ENCODE measurements at regions of chr1 and their contacts with region 1.

Region 1: GRCh38 chr1:153717330-153717729 is 10.5 kb upstream of the INTS3 start:
- DNase-seq: no peak
- H3K4me3 Mint-ChIP-seq: no peak overlapping the region
- H3K27ac Mint-ChIP-seq: no peak overlapping the region
- H3K4me1 Mint-ChIP-seq: peaks cover 2% of the 10 kb centered on the region
- H3K27me3 Mint-ChIP-seq: peaks cover 11% of the 10 kb centered on the region

Region 2: DNA sequence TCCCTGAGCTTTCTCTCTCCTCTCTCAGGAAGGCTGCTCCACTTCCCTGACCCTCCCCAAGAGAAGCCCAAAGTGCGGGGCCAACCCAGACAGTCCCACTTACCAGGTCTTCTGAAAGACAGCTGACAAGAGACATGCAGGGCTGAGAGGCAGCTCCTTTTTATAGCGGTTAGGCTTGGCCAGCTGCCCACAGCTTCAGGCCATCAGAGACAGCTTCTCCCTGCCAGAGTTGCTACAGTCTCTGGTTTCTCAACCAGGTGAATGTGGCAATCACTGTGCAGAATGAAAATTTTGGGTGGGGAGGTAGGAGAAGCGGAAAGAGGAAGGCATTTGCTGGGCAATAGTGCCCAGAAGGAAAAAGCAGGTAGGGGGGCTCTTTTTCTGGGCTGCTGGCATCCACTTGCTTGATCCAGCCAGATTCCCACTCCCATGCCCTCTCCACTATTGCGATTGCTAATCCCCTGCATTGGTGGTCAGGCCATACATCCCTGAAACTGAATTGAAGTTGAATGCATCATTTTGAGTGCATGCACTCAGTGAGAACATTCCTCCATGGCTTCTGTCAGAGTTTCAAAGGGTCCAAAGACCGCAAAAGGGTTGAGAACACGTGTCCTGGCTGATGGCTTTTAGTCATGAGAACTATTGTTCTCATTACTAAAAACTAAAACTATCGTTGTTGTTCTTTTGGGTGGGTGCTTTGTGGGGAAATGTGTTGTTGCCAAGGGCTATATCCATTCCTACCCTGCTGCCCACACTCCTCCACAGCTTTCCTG is 326.2 kb before region 1 on chr1 and contains the start of gene S100A8:
- intact Hi-C with region 1: no loop called
- DNase-seq: no peak
- H3K4me3 Mint-ChIP-seq: no peak within 1 kb of the TSS
- H3K27ac Mint-ChIP-seq: no peak within 1 kb of the TSS
- H3K4me1 Mint-ChIP-seq: peaks cover 4% of the 10 kb centered on the region
- H3K27me3 Mint-ChIP-seq: peaks cover 2% of the 10 kb centered on the region
- total RNA-seq, gene S100A8: not detected in 2 replicates

Region 3: DNA sequence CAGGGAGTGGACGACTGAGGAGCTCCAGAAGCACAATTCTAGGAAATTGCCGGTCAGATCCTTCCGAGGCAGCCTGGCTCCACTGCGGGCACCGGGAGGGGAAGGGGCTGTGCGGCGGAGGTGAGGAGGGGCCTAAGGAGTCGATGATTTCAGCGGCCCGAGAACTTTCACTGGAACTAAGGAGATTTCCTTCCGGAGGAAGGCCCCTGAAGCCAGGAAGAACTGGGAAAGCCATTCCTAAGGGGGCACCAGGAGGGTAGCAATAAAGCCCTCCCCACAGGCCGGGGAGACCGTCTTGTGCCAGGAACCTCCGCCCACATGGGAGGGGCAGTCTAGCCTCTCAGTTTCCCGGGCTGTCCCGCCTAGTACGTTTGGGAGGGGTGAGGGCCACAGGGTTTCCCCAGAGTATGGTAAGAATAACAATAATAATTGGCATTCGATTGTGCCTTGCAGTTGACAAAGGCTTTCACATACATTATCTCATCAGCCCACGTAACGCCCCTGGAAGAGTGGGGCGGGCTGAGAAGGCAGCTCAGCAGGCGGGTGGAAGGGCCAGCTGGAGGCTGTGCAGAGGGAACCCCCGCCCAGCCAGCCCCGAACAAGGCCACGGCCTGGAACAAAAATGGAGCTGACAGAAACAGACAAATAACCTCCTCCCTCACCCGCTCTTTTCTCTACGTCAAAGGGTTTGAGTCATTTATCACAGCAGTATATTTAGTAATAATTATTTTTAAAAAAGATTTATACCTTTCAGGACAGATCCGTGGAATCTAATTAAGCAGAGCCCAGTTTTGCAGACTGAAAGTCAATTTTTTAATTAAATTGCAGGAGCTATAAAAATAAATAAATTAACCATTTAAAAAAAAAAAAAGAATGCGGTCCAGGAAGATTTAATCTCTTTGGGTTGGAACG is 19.1 kb before region 1 on chr1:
- intact Hi-C with region 1: loop called (anchors 1 kb)
- DNase-seq: no peak
- H3K4me3 Mint-ChIP-seq: no peak overlapping the region
- H3K27ac Mint-ChIP-seq: no peak overlapping the region
- H3K4me1 Mint-ChIP-seq: no peaks in the 10 kb centered on the region
- H3K27me3 Mint-ChIP-seq: no peaks in the 10 kb centered on the region

Region 4: GRCh38 chr1:153749408-153750005 is 32.2 kb after region 1 on chr1:
- intact Hi-C with region 1: no loop called
- DNase-seq: peak; percentile 72
- H3K4me3 Mint-ChIP-seq: no peak overlapping the region
- H3K27ac Mint-ChIP-seq: no peak overlapping the region
- H3K4me1 Mint-ChIP-seq: peaks cover 6% of the 10 kb centered on the region
- H3K27me3 Mint-ChIP-seq: no peaks in the 10 kb centered on the region

Measured in activated T-helper 2 cell treated with anti-CD3 and anti-CD28 coated beads, Interferon-gamma antibody, Interleukin-2, Interleukin-4, amounts not matched to agents 10 μg/mL and 5 μg/mL and 100 μg/mL, durations not matched to agents 14 hours and 24 hours and 36 hours (primary cell).